ENCODE measurements at regions of chr7 and their contacts with region 1.

Region 1: DNA sequence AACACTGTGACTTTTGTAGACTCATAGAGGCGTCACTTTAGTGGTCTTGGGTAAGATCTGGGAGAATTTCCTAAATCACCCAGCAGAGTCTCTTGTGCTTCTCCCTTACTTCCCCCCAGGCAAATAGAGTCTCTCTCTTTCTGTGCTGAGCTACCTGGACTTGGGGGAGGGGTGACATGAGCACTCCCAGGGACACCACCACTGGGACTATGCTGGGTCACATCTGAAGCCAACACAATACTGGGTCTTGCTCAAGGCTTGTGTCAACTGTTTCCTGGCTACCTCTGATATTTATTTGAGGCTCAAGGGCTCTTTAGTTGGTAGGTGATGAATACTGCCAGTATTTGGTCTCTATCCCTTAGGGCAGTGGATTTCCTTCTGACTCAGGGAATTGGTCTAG is 214.6 kb upstream of the TPK1 start:
- DNase-seq: no peak
- ATAC-seq: no peak
- H3K4me3 ChIP-seq: no peak overlapping the region
- H3K27ac ChIP-seq: no peak overlapping the region
- H3K4me1 ChIP-seq: no peaks in the 10 kb centered on the region
- H3K27me3 ChIP-seq: no peaks in the 10 kb centered on the region
- CTCF ChIP-seq: no peak
- EP300 ChIP-seq: no peak
- POLR2A ChIP-seq: no peak
- RAD21 ChIP-seq: no peak

Region 2: GRCh38 chr7:144468990-144469732 is 581.3 kb before region 1 on chr7:
- CTCF ChIA-PET with region 1: no interaction called
- POLR2A ChIA-PET with region 1: no interaction called
- in situ Hi-C with region 1: no loop called
- intact Hi-C with region 1: loop called (anchors 5 kb)
- DNase-seq: no peak
- ATAC-seq: no peak
- H3K4me3 ChIP-seq: no peak overlapping the region
- H3K27ac ChIP-seq: no peak overlapping the region
- H3K4me1 ChIP-seq: no peaks in the 10 kb centered on the region
- H3K27me3 ChIP-seq: no peaks in the 10 kb centered on the region
- CTCF ChIP-seq: no peak
- EP300 ChIP-seq: no peak
- POLR2A ChIP-seq: no peak
- RAD21 ChIP-seq: no peak

Region 3: GRCh38 chr7:145183066-145183465 is 132.7 kb after region 1 on chr7:
- CTCF ChIA-PET with region 1: no interaction called
- POLR2A ChIA-PET with region 1: no interaction called
- in situ Hi-C with region 1: no loop called
- intact Hi-C with region 1: no loop called
- DNase-seq: no peak
- ATAC-seq: no peak
- H3K4me3 ChIP-seq: no peak overlapping the region
- H3K27ac ChIP-seq: no peak overlapping the region
- H3K4me1 ChIP-seq: no peaks in the 10 kb centered on the region
- H3K27me3 ChIP-seq: no peaks in the 10 kb centered on the region
- CTCF ChIP-seq: no peak
- EP300 ChIP-seq: no peak
- POLR2A ChIP-seq: no peak
- RAD21 ChIP-seq: no peak